Activated CD4-positive, alpha-beta T cell treated with anti-CD3 and anti-CD28 coated beads for 36 hours (primary cell): ENCODE measurements at regions of chr10 and their contacts with region 1.

Region 1: GRCh38 chr10:62610649-62611229 is 193.8 kb upstream of the ADO start:
- DNase-seq: peak; percentile 87
- ATAC-seq: peak; percentile 79
- H3K4me3 Mint-ChIP-seq: no peak overlapping the region
- H3K27ac Mint-ChIP-seq: no peak overlapping the region
- H3K4me1 Mint-ChIP-seq: peaks cover 27% of the 10 kb centered on the region
- H3K27me3 Mint-ChIP-seq: peaks cover 14% of the 10 kb centered on the region

Region 2: GRCh38 chr10:62637249-62638061 is 26.7 kb after region 1 on chr10:
- CTCF ChIA-PET with region 1: interaction called, 9 read pairs
- POLR2A ChIA-PET with region 1: no interaction called
- intact Hi-C with region 1: loop called (anchors 1 to 2 kb)
- DNase-seq: peak; percentile 82
- ATAC-seq: peak; percentile 95
- H3K4me3 Mint-ChIP-seq: no peak overlapping the region
- H3K27ac Mint-ChIP-seq: no peak overlapping the region
- H3K4me1 Mint-ChIP-seq: peaks cover 21% of the 10 kb centered on the region
- H3K27me3 Mint-ChIP-seq: no peaks in the 10 kb centered on the region

Region 3: GRCh38 chr10:63003816-63004453 is 393.2 kb after region 1 on chr10:
- CTCF ChIA-PET with region 1: interaction called, 3 read pairs
- POLR2A ChIA-PET with region 1: no interaction called
- intact Hi-C with region 1: loop called (anchors 5 kb)
- DNase-seq: no peak
- ATAC-seq: peak; percentile 39
- H3K4me3 Mint-ChIP-seq: no peak overlapping the region
- H3K27ac Mint-ChIP-seq: no peak overlapping the region
- H3K4me1 Mint-ChIP-seq: peaks cover 13% of the 10 kb centered on the region
- H3K27me3 Mint-ChIP-seq: peaks cover 26% of the 10 kb centered on the region